ENCODE measurements at regions of chr7 and their contacts with region 1.

Region 1: DNA sequence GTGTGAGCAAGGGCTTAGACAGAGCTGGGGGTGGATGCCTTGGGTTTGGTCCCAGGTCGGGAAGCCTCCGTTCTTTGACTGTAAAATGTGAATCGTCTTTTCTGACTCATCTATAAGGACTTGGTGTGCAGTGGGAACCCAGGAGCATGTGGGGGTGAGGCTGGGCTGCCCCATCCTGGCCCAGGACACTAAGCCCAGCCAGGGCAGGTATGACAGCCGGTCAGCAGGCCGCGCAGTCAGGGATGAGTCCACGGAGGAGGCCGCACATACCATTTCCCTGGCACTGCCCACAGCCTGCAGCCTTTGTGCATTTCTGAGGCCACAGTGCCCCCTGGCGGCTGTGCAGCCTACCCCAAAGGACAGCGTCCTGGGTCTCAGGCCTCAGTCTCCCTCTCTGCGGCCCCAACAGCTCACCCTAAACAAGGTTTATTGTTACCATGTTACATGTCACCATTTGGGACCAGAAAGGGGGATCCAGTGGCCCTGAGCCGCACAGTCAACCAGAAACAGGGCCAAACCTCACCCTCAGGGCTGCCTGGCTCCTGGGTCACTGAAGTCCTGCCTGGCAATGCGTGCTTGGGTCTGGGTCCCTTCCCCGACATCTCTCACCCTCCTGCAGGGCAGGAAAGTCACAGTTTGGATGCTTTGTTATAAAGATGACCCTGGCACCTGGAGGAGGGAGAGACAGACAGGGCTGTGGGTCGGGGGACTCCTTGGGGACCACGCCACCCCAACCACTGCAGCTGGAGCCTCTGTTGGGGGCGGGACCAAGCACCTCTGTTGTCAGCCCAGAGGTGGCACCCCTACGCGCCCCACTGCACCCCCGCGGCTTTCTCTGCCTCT is 14.4 kb upstream of the SH2B2 start:
- DNase-seq: peak; percentile 85
- ATAC-seq: peak; percentile 94 to 95

Region 2: DNA sequence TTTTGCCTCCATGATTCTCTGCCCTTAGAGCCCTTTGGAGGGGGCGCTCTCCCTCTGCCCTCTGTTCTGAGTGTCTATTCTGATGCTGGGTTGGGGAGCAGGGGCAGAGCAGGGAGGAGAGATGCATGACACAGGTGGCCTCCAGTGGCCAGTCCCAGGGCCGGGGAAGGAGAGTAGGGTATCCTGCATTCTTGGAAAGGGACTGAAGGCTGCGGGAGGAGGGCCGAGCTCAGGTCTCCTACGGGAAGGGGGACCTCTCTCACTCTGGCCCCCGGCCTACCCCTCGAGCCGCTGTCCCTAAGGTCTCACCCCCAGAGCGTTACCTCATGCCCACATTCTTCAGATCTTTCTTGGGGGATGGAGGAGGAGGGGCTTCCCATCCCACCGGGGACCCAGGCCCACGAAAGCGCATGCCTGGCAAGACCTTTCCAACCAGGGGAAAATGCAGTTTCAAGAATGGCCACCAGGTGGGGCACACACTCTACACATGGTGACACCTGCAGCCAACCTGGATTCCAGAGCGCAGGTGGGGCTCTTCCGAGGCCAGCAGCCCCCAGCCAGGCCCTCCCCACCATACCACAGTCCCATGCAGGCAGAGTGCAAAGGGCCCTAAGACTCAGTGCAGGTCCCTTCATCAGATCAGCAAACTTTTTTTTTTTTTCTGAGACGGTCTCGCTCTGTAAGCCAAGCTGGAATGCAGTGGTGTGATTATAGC is 729.6 kb before region 1 on chr7:
- intact Hi-C with region 1: loop called (anchors 1 to 2 kb)
- DNase-seq: peak; percentile 65
- ATAC-seq: peak; percentile 53 to 54

Region 3: DNA sequence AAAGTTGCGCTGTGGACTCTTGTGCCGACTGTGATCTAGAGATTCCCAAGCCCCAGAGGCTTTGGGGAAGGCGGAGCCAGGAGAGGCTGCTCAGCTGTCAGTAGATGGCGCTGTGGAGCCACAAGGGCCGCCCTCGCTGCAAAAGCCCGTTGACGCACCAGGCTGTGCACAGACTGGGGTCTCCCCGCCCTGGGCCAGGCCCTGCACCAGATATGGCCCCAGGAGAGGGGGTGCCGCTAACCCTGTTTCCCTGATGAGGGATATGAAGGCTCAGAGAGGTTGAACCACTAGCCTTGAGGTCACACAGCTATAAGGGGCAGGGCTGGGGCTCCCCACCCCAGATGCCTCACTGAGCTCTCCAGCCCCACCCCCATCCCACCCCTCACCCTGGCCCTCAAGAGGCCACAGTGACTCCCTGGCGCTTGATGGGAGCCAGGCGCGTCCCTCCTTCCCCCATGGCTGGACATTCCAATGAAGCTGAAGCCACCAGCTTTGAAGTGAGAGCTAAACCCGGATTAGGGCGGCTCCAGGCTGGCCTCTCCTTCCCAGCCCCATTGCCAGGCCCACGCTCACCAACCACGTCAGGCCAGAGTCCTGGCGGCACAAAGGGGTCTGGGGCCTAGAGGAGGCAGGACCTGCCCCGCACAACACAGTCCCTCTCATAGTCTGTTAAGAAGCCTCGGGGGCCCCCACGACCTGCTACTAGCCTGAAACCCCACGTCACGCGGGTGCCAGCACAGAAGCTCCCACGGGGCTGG is 669.6 kb before region 1 on chr7:
- intact Hi-C with region 1: loop called (anchors 2 to 10 kb)
- DNase-seq: peak; percentile 83
- ATAC-seq: peak; percentile 87 to 94

Region 4: DNA sequence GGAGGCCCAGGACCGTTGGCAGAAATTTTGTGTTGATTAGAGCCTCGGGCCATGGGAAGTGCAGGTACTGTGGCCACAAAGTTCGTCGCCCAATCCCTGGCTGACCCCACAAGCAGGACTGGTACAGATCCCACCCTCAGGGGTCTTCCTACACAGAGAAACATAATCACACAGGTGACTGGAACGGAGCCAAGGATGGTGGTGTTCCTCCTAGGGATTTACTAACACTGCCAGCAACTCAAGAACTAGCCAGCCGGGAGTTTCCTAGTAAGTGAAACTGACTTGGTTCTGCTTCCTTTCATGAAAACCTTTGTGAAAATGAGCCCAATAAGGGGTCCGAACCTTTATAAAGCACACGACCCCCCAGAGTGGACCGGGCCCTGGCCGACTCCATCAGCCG is 449.2 kb before region 1 on chr7:
- intact Hi-C with region 1: no loop called
- DNase-seq: no peak
- ATAC-seq: peak in 1 of 2 donors; percentile 4

Measured in left cardiac atrium (tissue), 4 donors.